ENCODE measurements at regions of chr20 and their contacts with region 1.

Region 1: DNA sequence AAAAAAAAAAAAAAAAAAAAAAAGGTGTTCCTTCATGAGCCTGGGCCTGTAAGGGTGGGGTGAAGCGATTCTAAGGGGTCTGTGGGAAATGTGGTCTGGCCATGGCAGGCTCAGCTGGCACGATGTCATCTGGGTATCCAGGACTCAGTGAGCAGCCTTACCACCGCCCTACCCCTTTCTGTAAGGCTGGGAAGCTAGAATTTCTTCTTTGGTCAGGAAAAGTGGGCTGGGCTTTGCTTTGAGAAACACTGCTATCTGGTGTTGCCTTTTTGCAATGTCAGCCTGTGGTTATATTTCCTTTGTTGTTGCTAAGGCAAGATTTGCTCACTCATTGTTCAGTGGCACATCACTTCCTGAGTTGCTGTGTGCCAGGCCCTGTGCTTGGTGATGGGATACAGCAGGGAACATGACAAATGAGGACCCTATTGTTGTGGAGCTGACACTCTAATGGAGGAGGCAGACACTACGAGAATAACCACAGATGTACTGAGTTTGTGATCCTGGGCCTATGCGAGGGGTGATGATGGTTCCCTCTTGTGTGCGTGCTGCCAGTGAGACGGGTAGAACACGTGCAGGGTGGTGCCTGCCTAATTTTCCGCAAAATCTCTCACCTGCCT is 45.9 kb upstream of the ZNFX1 start:
- DNase-seq: peak in 1 of 2 experiments; percentile 70
- H3K4me3 ChIP-seq: no peak overlapping the region
- H3K4me3 Mint-ChIP-seq: no peak overlapping the region
- H3K27ac Mint-ChIP-seq: no peak overlapping the region
- H3K4me1 ChIP-seq: no peaks in the 10 kb centered on the region
- H3K4me1 Mint-ChIP-seq: no peaks in the 10 kb centered on the region
- H3K27me3 ChIP-seq: peaks cover 2% of the 10 kb centered on the region; the same call in 1 of the 2 replicates
- H3K27me3 Mint-ChIP-seq: peaks cover 19% of the 10 kb centered on the region
- CTCF ChIP-seq: peak; percentile 55 to 61

Region 2: DNA sequence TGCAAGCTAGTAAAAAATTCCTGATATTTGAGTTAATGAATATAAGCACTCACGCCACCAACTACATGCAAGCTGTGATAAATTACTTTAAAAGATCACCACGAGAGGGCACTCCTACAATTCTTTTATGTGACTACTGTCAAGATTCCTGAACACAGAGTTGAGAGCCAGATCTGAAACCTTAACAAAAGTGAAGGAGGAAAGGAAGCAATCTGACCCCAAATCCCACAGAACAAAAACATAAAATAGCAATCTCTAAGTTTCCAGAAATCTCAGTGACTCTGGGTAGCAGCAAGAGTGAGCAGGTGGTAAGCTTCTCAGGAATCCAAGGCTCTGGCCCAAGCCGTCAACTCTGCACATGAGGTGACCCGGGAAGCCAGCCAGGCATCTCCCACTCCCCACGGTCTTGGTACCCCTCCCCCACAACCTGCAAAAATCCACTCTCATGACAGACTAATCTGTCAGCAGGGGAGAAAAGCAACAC is 190.7 kb before region 1 on chr20:
- CTCF ChIA-PET with region 1: interaction called, 11 read pairs
- POLR2A ChIA-PET with region 1: no interaction called
- intact Hi-C with region 1: loop called (anchors 1 kb)
- DNase-seq: peak in 1 of 2 experiments; percentile 80
- H3K4me3 ChIP-seq: no peak overlapping the region
- H3K4me3 Mint-ChIP-seq: no peak overlapping the region
- H3K27ac Mint-ChIP-seq: no peak overlapping the region
- H3K4me1 ChIP-seq: 0 out of 2 replicates have a peak, but pooled peaks cover 5% of the 10 kb centered on the region
- H3K4me1 Mint-ChIP-seq: peaks cover 4% of the 10 kb centered on the region
- H3K27me3 ChIP-seq: no peaks in the 10 kb centered on the region
- H3K27me3 Mint-ChIP-seq: no peaks in the 10 kb centered on the region
- CTCF ChIP-seq: peak; percentile 73 to 77

Region 3: GRCh38 chr20:49245921-49246740 is 77.6 kb before region 1 on chr20:
- CTCF ChIA-PET with region 1: interaction called, 101 read pairs
- POLR2A ChIA-PET with region 1: interaction called, 3 read pairs
- intact Hi-C with region 1: loop called (anchors 1 kb)
- DNase-seq: peak in 1 of 2 experiments; percentile 74
- H3K4me3 ChIP-seq: no peak overlapping the region
- H3K4me3 Mint-ChIP-seq: no peak overlapping the region
- H3K27ac Mint-ChIP-seq: no peak overlapping the region
- H3K4me1 ChIP-seq: no peaks in the 10 kb centered on the region
- H3K4me1 Mint-ChIP-seq: no peaks in the 10 kb centered on the region
- H3K27me3 ChIP-seq: no peaks in the 10 kb centered on the region
- H3K27me3 Mint-ChIP-seq: no peaks in the 10 kb centered on the region
- CTCF ChIP-seq: peak; percentile 97

Region 4: GRCh38 chr20:49262444-49262843 is 61.3 kb before region 1 on chr20:
- CTCF ChIA-PET with region 1: interaction called, 13 read pairs
- POLR2A ChIA-PET with region 1: no interaction called
- intact Hi-C with region 1: no loop called
- DNase-seq: no peak
- H3K4me3 ChIP-seq: no peak overlapping the region
- H3K4me3 Mint-ChIP-seq: no peak overlapping the region
- H3K27ac Mint-ChIP-seq: no peak overlapping the region
- H3K4me1 ChIP-seq: peaks cover 6% of the 10 kb centered on the region; the same call in 1 of the 2 replicates
- H3K4me1 Mint-ChIP-seq: peaks cover 3% of the 10 kb centered on the region
- H3K27me3 ChIP-seq: no peaks in the 10 kb centered on the region
- H3K27me3 Mint-ChIP-seq: no peaks in the 10 kb centered on the region
- CTCF ChIP-seq: no peak

Region 5: GRCh38 chr20:49278036-49278817 is 45.5 kb before region 1 on chr20 and contains the start of gene ZNFX1:
- CTCF ChIA-PET with region 1: interaction called, 7 read pairs
- POLR2A ChIA-PET with region 1: interaction called, 15 read pairs
- intact Hi-C with region 1: loop called (anchors 1 kb)
- DNase-seq: peak; percentile 100
- H3K4me3 ChIP-seq: peak within 1 kb of the TSS; percentile 76
- H3K4me3 Mint-ChIP-seq: peak within 1 kb of the TSS; percentile 81
- H3K27ac Mint-ChIP-seq: peak within 1 kb of the TSS; percentile 97
- H3K4me1 ChIP-seq: peaks cover 44% of the 10 kb centered on the region
- H3K4me1 Mint-ChIP-seq: peaks cover 56% of the 10 kb centered on the region
- H3K27me3 ChIP-seq: no peaks in the 10 kb centered on the region
- H3K27me3 Mint-ChIP-seq: peaks cover 9% of the 10 kb centered on the region
- CTCF ChIP-seq: no peak
- total RNA-seq, gene ZNFX1: 34.0 and 34.7 TPM in 2 replicates

Region 6: GRCh38 chr20:49286689-49287551 is 36.8 kb before region 1 on chr20:
- CTCF ChIA-PET with region 1: interaction called, 24 read pairs
- POLR2A ChIA-PET with region 1: interaction called, 16 read pairs
- intact Hi-C with region 1: loop called (anchors 2 kb)
- DNase-seq: peak; percentile 86 to 90
- H3K4me3 ChIP-seq: no peak overlapping the region
- H3K4me3 Mint-ChIP-seq: peak overlapping the region; percentile 81
- H3K27ac Mint-ChIP-seq: peak overlapping the region; percentile 79
- H3K4me1 ChIP-seq: peaks cover 78% of the 10 kb centered on the region
- H3K4me1 Mint-ChIP-seq: peaks cover 93% of the 10 kb centered on the region
- H3K27me3 ChIP-seq: no peaks in the 10 kb centered on the region
- H3K27me3 Mint-ChIP-seq: no peaks in the 10 kb centered on the region
- CTCF ChIP-seq: no peak

Region 7: DNA sequence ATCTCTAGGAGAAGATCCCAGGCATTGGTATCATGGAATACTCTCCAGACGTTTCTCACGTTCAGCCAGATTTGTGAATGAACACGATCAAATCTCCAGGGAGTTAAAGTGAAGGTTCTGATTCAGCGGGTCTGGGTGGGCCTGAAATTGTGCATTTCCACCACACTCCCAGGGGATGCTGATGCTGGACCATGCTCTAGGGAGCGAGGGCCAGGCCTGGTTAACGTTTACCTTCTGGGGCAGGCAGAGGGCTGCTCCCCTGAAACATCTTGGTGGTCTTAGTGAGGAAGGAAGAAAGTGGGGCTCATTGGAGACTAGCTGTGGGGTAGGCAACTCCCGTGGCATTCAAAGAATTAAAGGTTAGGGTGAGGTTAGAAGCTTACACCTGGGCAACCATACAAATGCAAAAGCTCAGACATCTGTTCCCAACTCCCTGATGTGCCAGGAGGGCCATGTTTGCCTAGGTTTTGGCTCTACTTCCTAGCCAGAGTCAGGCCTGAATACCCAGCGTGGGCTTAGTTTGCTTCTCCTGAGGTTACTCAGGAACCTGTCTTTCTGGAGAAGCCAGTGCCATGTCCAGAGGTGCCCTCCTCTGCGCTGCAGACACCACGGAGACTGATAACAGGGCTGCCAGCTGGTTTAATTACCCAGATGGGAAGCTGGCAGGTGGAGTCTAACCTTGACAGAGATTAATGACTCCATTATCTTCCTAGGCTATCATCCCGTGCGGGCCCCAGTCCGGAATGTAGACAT is 17.0 kb before region 1 on chr20:
- CTCF ChIA-PET with region 1: interaction called, 12 read pairs
- POLR2A ChIA-PET with region 1: interaction called, 3 read pairs
- intact Hi-C with region 1: no loop called
- DNase-seq: peak; percentile 71 to 85
- H3K4me3 ChIP-seq: no peak overlapping the region
- H3K4me3 Mint-ChIP-seq: peak overlapping the region; percentile 7
- H3K27ac Mint-ChIP-seq: no peak overlapping the region
- H3K4me1 ChIP-seq: peaks cover 15% of the 10 kb centered on the region
- H3K4me1 Mint-ChIP-seq: peaks cover 17% of the 10 kb centered on the region
- H3K27me3 ChIP-seq: no peaks in the 10 kb centered on the region
- H3K27me3 Mint-ChIP-seq: no peaks in the 10 kb centered on the region
- CTCF ChIP-seq: no peak

Region 8: DNA sequence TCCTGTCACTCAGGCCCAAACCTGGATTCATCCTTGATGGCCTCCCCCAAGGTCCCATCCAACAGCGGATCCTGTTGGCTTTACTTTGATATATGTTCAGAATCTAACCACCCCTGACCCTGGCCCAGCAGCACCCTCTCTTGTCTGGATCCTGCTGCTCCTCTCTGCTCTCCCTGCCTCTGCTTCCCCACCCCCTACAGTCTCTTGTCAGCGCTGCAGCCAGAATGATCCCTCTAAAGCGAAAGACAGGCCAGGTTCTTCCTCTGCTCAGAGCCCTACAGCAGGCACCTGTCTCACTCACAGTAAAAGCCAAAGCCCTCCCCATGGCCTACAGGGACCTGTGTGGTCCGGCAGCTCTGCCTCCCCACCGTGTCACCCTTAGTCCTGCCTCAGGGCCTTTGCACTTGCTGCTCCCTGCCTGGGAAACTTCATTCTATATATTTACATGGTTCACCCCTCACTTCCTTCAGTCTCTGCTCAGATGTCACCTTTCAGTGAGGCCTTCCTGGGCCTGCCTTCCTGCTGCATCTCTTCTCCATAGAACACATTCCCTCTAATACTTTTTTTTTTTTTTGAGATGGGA is 196.1 kb after region 1 on chr20:
- CTCF ChIA-PET with region 1: no interaction called
- POLR2A ChIA-PET with region 1: no interaction called
- intact Hi-C with region 1: no loop called
- DNase-seq: no peak
- H3K4me3 ChIP-seq: no peak overlapping the region
- H3K4me3 Mint-ChIP-seq: no peak overlapping the region
- H3K27ac Mint-ChIP-seq: no peak overlapping the region
- H3K4me1 ChIP-seq: no peaks in the 10 kb centered on the region
- H3K4me1 Mint-ChIP-seq: no peaks in the 10 kb centered on the region
- H3K27me3 ChIP-seq: peaks cover 2% of the 10 kb centered on the region
- H3K27me3 Mint-ChIP-seq: peaks cover 24% of the 10 kb centered on the region
- CTCF ChIP-seq: peak in 1 of 2 experiments; percentile 35

Measured in Caco-2 (cell line).